K562 (cell line): ENCODE measurements at regions of chr1 and their contacts with region 1.

Region 1: GRCh38 chr1:26233903-26234643 is at the start of gene CEP85:
- DNase-seq: peak; percentile 99 to 100 (median 100)
- ATAC-seq: peak; percentile 94
- H3K4me3 ChIP-seq: peak within 1 kb of the TSS; percentile 76
- H3K27ac ChIP-seq: peak within 1 kb of the TSS; percentile 89
- H3K4me1 ChIP-seq: peaks cover 12 to 22% of the 10 kb centered on the region in 2 experiments; a peak in 4 of 5 replicates
- H3K27me3 ChIP-seq: no peaks in the 10 kb centered on the region
- CTCF ChIP-seq: peak; percentile 96 to 99 (median 98)
- EP300 ChIP-seq: peak; percentile 55
- POLR2A ChIP-seq: peak; percentile 99
- RAD21 ChIP-seq: peak; percentile 72 to 87; a peak in 3 of 4 replicates
- polyA plus RNA-seq, gene CEP85: 42.1 to 107 TPM

Region 2: DNA sequence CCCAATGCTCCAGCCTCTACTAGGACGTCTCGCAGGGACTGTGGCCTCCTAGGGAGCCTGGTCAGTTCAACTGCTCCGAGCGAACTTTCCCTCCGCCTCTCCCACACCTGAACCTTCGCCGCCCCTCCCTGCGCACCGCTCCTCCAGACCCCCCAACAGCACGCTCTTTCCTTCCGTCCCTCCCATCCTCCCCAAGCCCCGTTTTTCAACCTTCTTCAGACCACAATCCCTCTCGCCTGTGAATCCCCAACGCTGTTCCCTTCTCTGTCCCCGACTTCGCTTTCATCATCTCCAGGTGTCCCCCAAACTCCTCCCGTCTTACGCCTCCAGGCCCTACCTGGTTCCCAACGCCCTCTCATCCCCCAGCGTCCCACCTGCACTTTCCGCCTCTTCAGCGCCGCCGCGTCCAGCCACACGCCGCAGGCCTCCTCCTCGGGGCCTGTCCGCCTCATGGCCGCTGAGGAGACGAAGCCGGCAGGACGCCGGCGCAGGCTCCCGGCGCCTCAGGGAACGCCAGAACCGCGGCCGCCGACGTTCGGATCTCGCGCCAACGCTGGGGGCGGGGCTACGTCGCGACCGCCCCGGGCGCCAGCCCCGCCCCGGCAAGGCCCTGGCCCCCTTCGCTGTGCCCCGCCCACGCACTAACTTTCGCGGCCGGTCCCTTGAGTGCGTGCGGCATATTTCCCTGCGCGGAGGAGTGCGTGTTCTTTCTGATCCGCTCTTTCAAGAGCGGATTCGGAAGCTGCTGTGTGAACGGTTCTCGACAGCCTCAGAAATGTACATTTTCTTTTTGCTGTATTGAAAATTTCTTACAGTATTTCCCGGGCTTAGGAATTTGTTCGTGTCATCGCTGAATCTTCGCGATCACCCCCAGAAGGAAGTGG is 374.9 kb before region 1 on chr1 and contains the start of gene AUNIP:
- CTCF ChIA-PET with region 1: no interaction called
- POLR2A ChIA-PET with region 1: no interaction called
- in situ Hi-C with region 1: no loop called
- intact Hi-C with region 1: loop called (anchors 5 kb)
- DNase-seq: peak; percentile 97 to 100 (median 98)
- ATAC-seq: peak; percentile 88
- H3K4me3 ChIP-seq: peak within 1 kb of the TSS; percentile 87
- H3K27ac ChIP-seq: peak within 1 kb of the TSS; percentile 92
- H3K4me1 ChIP-seq: peaks cover 49 to 60% of the 10 kb centered on the region in 2 experiments
- H3K27me3 ChIP-seq: no peaks in the 10 kb centered on the region
- CTCF ChIP-seq: 0 out of 6 replicates have a peak, but pooled peaks of 2 of the 3 experiments have one; percentile 12 to 15
- EP300 ChIP-seq: 0 out of 2 replicates have a peak, but pooled peaks have one; percentile 2
- POLR2A ChIP-seq: peak; percentile 97
- RAD21 ChIP-seq: peak in 1 of 2 experiments; percentile 23; a peak in 1 of 4 replicates
- polyA plus RNA-seq, gene AUNIP: 12.1 to 15.2 TPM

Region 3: DNA sequence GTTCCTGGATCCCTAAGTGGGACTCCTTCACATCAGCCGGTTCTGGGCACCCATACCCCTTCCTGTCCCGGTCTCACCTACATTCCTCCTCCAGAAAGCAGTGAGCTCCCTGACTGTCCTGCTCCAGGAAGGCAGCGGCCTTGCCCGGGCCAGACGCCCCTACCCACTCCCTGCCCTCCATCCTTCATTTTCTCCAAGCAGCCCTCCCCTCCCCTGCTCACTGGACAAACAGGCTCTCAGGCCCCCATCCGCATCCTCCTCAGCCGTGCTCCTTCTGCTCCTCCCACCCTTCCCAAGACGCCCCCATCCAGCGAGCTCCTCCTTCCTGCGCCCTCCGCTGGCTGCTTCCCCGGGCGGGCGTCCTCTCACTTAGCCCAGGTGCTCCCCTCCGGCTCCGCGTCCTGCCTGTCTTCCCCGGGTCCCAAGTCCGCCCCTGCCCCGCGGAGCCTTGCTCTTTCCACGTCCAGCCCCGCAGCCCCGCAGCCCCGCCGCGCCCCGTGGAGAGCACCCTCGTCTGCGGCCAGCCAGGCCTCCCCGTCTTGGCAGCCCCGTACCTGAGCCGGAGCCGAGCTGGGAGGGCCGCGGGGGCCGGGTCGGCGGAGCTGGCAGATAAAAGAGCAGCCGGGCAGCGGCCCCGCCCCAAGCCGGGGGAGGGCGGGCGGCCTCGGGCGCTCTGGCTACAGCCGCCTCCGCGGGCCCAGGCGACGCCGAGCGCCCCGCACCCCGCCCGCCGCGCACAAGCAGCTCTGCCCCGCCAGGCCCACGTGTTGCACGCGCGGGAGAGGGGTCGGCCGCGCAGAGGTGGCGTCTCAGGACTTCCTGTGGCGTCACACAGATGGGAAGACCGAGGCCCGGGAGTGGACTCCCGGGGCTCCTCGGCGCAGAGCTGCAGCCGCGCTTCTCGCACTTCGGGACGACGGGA is 358.9 kb before region 1 on chr1 and contains the start of gene PAQR7:
- CTCF ChIA-PET with region 1: no interaction called
- POLR2A ChIA-PET with region 1: no interaction called
- in situ Hi-C with region 1: no loop called
- intact Hi-C with region 1: no loop called
- DNase-seq: peak; percentile 90 to 97 (median 94)
- ATAC-seq: peak; percentile 92
- H3K4me3 ChIP-seq: peak within 1 kb of the TSS; percentile 51
- H3K27ac ChIP-seq: peak within 1 kb of the TSS; percentile 77
- H3K4me1 ChIP-seq: peaks cover 55 to 56% of the 10 kb centered on the region in 2 experiments
- H3K27me3 ChIP-seq: no peaks in the 10 kb centered on the region
- CTCF ChIP-seq: peak in 2 of 3 experiments; percentile 18 to 23; a peak in 2 of 6 replicates
- EP300 ChIP-seq: 0 out of 2 replicates have a peak, but pooled peaks have one; percentile 15
- POLR2A ChIP-seq: peak; percentile 70
- RAD21 ChIP-seq: peak in 1 of 2 experiments; percentile 9; a peak in 2 of 4 replicates
- polyA plus RNA-seq, gene PAQR7: 1.1 to 1.2 TPM

Region 4: DNA sequence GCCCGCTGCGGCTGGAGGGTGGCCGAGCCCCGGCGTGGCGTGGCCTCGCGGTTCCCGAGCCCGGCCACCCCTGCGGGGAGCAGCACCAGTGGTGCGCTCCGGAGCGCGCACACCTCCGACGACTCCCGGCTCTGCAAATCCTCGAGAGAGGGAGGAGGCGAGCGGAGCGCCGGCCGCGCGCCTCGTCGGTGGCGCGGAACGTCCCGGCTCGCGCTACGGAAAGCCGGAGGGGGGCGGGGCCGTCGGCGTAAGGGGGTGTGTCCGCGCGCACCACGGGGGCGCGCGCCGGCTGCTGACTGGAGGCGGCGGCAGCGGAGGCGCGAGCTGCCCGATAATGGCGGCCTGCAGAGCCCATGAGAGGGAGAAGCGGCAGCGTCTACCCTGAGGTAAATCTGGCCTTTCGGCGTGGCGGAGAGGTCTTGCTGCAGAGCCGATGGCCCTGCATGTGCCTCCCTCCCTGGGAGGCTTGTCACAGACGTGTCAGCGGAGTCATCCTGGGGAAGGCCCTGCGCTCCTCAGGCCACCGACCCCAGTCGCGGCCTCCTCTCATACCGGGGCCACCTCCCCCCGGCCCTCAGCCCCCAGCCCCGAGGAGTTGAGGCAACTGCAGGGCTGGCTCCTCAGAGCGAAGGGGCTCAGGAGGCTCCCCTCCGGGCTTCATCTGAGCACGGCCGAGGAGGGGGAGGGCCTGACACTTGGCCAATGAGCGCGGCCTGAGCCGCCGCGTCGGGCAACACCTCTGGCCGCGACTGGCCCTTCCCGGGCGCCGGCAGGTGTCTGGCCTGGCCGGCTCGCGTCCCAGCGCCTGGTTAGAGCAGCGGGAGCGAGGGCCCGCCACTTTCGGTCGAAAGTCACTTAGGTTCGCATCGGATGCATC is 122.3 kb before region 1 on chr1 and contains the start of gene PDIK1L:
- CTCF ChIA-PET with region 1: no interaction called
- POLR2A ChIA-PET with region 1: no interaction called
- in situ Hi-C with region 1: no loop called
- intact Hi-C with region 1: loop called (anchors 5 kb)
- DNase-seq: peak; percentile 90 to 98 (median 94)
- ATAC-seq: peak; percentile 85
- H3K4me3 ChIP-seq: peak within 1 kb of the TSS; percentile 94
- H3K27ac ChIP-seq: peak within 1 kb of the TSS; percentile 92
- H3K4me1 ChIP-seq: peaks cover 13 to 29% of the 10 kb centered on the region in 2 experiments
- H3K27me3 ChIP-seq: no peaks in the 10 kb centered on the region
- CTCF ChIP-seq: 0 out of 6 replicates have a peak, but pooled peaks of 2 of the 3 experiments have one; percentile 4 to 10
- EP300 ChIP-seq: no peak; the same call in 1 of the 2 replicates
- POLR2A ChIP-seq: peak; percentile 84
- RAD21 ChIP-seq: peak in 1 of 2 experiments; percentile 14; a peak in 1 of 4 replicates
- polyA plus RNA-seq, gene PDIK1L: 14.7 to 21.5 TPM

Region 5: DNA sequence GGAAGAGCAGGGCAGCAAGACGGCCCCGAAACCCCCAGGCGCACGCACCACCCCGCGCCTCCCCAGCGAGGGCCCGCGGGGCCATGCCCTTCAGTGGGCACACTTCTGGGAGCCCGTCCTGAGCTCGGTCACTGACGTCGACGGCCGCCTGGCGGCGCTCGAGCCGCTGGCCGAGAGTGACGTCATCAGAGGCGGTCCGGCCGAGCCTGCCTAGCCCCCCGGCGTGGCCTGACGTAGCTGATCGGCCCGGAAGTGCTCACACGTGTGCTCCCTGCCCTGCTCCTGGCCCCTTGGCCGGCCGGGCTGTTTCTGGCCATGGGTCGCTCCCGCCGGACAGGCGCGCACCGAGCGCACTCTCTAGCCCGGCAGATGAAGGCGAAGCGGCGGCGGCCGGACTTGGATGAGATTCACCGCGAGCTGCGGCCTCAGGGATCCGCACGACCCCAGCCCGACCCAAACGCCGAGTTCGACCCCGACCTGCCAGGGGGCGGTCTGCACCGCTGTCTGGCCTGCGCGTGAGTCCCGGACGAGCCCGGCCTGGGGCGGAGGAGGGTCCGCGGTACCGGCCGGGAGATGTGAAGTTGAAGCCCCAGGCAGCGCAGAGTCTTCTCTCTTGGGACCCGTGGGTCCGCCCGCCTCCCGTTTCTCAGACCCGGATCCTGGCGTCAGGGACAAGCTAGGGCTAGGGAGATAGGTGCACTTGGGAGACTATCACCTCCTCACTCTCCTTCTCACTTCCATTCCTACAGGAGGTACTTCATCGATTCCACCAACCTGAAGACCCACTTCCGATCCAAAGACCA is 64.2 kb before region 1 on chr1 and contains the start of gene ZNF593:
- CTCF ChIA-PET with region 1: interaction called, 3 read pairs
- POLR2A ChIA-PET with region 1: interaction called, 12 read pairs
- in situ Hi-C with region 1: no loop called
- intact Hi-C with region 1: loop called (anchors 2 kb)
- DNase-seq: peak; percentile 97 to 99 (median 99)
- ATAC-seq: peak; percentile 96
- H3K4me3 ChIP-seq: peak within 1 kb of the TSS; percentile 89
- H3K27ac ChIP-seq: peak within 1 kb of the TSS; percentile 85
- H3K4me1 ChIP-seq: peaks cover 22 to 37% of the 10 kb centered on the region in 2 experiments
- H3K27me3 ChIP-seq: no peaks in the 10 kb centered on the region
- CTCF ChIP-seq: peak; percentile 96 to 99 (median 98)
- EP300 ChIP-seq: peak; percentile 35; the same call in 1 of the 2 replicates
- POLR2A ChIP-seq: peak; percentile 93
- RAD21 ChIP-seq: peak; percentile 62 to 72
- polyA plus RNA-seq, gene ZNF593: 9.8 to 27.1 TPM

Region 6: DNA sequence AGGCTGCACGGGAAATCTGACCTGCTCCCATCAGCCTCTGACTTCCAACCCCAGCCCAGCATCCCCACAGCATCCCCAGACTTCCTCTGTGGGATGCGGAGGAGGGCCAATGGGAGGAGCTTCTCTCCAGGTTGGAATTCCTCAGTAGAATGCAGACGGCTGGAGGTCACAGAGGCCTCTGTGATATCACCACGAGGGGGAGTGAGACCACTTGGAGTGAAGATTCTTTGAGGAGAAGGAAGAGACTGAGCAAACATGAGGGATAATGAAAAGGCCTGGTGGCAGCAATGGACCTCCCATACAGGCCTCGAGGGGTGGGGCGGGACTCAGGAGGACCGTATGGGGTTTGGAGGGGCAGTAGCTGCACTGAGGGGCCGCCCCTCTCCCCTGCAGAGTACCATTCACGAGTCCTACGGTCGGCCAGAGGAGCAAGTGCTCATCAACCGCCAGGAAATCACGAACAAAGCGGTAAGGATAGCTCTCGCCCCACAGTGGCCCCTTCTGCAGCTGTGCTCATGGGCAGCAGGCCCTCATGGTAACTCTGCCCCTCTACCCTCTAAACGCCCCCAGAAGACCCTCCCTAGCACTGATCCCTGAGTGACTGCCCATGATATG is 43.6 kb before region 1 on chr1 and contains the start of gene CATSPER4:
- CTCF ChIA-PET with region 1: interaction called, 4 read pairs
- POLR2A ChIA-PET with region 1: no interaction called
- in situ Hi-C with region 1: no loop called
- intact Hi-C with region 1: loop called (anchors 1 kb)
- DNase-seq: peak; percentile 73 to 75 (median 74)
- ATAC-seq: peak; percentile 87
- H3K4me3 ChIP-seq: no peak within 1 kb of the TSS
- H3K27ac ChIP-seq: no peak within 1 kb of the TSS
- H3K4me1 ChIP-seq: peaks cover 0 to 23% of the 10 kb centered on the region in 2 experiments; a peak in 2 of 5 replicates
- H3K27me3 ChIP-seq: no peaks in the 10 kb centered on the region
- CTCF ChIP-seq: peak; percentile 68 to 82 (median 74)
- EP300 ChIP-seq: no peak
- POLR2A ChIP-seq: no peak
- RAD21 ChIP-seq: peak; percentile 57 to 82
- polyA plus RNA-seq, gene CATSPER4: 0.04 TPM in 1 of 2 experiments, not detected in the other

Region 7: GRCh38 chr1:26220199-26220912 is 13.7 kb before region 1 on chr1:
- CTCF ChIA-PET with region 1: no interaction called
- POLR2A ChIA-PET with region 1: interaction called, 14 read pairs
- in situ Hi-C with region 1: no loop called
- intact Hi-C with region 1: no loop called
- DNase-seq: no peak
- ATAC-seq: 0 out of 3 replicates have a peak, but pooled peaks have one; percentile 15
- H3K4me3 ChIP-seq: no peak overlapping the region
- H3K27ac ChIP-seq: no peak overlapping the region
- H3K4me1 ChIP-seq: peaks cover 0 to 20% of the 10 kb centered on the region in 2 experiments; a peak in 3 of 5 replicates
- H3K27me3 ChIP-seq: 0 out of 5 replicates have a peak, but pooled peaks cover 0 to 3% of the 10 kb centered on the region in 2 experiments
- CTCF ChIP-seq: no peak
- EP300 ChIP-seq: no peak
- POLR2A ChIP-seq: no peak
- RAD21 ChIP-seq: no peak

Region 8: DNA sequence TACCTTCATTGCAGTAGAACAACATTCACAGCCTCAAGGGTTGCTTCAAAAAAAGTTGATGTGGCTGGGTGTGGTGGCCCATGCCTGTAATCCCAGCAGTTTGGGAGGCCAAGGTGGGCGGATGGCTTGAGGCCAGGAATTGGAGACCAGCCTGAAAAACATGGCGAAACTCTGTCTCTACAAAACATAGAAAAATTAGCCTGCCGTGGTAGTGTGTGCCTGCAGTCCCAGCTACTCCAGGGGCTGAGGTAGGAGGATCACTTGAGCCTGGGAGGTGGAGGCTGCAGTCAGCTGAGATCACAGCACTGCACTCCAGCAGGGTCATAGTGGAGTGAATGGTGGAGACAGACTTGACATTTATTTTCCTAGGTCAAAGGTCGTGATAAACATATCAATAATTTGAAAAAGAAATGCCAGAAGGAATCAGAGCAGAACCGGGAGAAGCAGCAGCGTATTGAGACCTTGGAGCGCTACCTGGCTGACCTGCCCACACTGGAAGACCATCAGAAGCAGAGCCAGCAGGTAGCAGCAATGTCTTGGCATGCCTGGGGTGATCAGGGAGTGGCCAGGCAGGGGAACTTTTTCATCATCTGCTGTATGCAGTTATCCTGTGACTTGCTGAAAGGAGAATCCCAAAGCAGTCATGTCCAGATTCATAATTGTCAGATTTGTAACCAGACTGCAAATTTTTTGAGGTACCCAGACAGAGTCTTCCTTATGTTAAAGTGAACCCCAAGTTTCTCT is 34.2 kb after region 1 on chr1:
- CTCF ChIA-PET with region 1: no interaction called
- POLR2A ChIA-PET with region 1: no interaction called
- in situ Hi-C with region 1: no loop called
- intact Hi-C with region 1: no loop called
- DNase-seq: no peak
- ATAC-seq: no peak
- H3K4me3 ChIP-seq: no peak overlapping the region
- H3K27ac ChIP-seq: peak overlapping the region; percentile 20; the same call in 1 of the 3 replicates
- H3K4me1 ChIP-seq: no peaks in the 10 kb centered on the region; a peak in 1 of 5 replicates
- H3K27me3 ChIP-seq: no peaks in the 10 kb centered on the region
- CTCF ChIP-seq: no peak
- EP300 ChIP-seq: no peak
- POLR2A ChIP-seq: no peak
- RAD21 ChIP-seq: no peak

Region 9: GRCh38 chr1:26291433-26291832 is 57.4 kb after region 1 on chr1:
- CTCF ChIA-PET with region 1: no interaction called
- POLR2A ChIA-PET with region 1: no interaction called
- in situ Hi-C with region 1: no loop called
- intact Hi-C with region 1: no loop called
- DNase-seq: no peak
- ATAC-seq: no peak
- H3K4me3 ChIP-seq: no peak overlapping the region
- H3K27ac ChIP-seq: no peak overlapping the region
- H3K4me1 ChIP-seq: peaks cover 34 to 55% of the 10 kb centered on the region in 2 experiments
- H3K27me3 ChIP-seq: no peaks in the 10 kb centered on the region
- CTCF ChIP-seq: no peak
- EP300 ChIP-seq: no peak
- POLR2A ChIP-seq: no peak
- RAD21 ChIP-seq: no peak

Region 10: GRCh38 chr1:26359981-26360800 is 126.1 kb after region 1 on chr1:
- CTCF ChIA-PET with region 1: no interaction called
- POLR2A ChIA-PET with region 1: no interaction called
- in situ Hi-C with region 1: no loop called
- intact Hi-C with region 1: no loop called
- DNase-seq: no peak
- ATAC-seq: no peak
- H3K4me3 ChIP-seq: no peak overlapping the region
- H3K27ac ChIP-seq: no peak overlapping the region
- H3K4me1 ChIP-seq: peaks cover 6 to 40% of the 10 kb centered on the region in 2 experiments; a peak in 4 of 5 replicates
- H3K27me3 ChIP-seq: no peaks in the 10 kb centered on the region; a peak in 1 of 5 replicates
- CTCF ChIP-seq: no peak
- EP300 ChIP-seq: no peak
- POLR2A ChIP-seq: no peak
- RAD21 ChIP-seq: no peak